ENCODE measurements at regions of chr11 and their contacts with region 1.

Region 1: GRCh38 chr11:1837171-1838076 is 1.4 kb upstream of the TNNI2 start:
- DNase-seq: peak; percentile 88
- ATAC-seq: peak; percentile 75
- H3K4me3 ChIP-seq: peak overlapping the region in 1 of 5 experiments; percentile 5
- H3K4me3 Mint-ChIP-seq: peak overlapping the region; percentile 56
- H3K27ac ChIP-seq: peak overlapping the region; percentile 22 to 68
- H3K27ac Mint-ChIP-seq: peak overlapping the region; percentile 78
- H3K4me1 ChIP-seq: peaks cover 41 to 51% of the 10 kb centered on the region in 2 donors
- H3K4me1 Mint-ChIP-seq: peaks cover 26% of the 10 kb centered on the region
- H3K27me3 ChIP-seq: peaks cover 0 to 19% (median 5%) of the 10 kb centered on the region in 4 experiments
- H3K27me3 Mint-ChIP-seq: no peaks in the 10 kb centered on the region
- CTCF ChIP-seq: peak; percentile 90

Region 2: DNA sequence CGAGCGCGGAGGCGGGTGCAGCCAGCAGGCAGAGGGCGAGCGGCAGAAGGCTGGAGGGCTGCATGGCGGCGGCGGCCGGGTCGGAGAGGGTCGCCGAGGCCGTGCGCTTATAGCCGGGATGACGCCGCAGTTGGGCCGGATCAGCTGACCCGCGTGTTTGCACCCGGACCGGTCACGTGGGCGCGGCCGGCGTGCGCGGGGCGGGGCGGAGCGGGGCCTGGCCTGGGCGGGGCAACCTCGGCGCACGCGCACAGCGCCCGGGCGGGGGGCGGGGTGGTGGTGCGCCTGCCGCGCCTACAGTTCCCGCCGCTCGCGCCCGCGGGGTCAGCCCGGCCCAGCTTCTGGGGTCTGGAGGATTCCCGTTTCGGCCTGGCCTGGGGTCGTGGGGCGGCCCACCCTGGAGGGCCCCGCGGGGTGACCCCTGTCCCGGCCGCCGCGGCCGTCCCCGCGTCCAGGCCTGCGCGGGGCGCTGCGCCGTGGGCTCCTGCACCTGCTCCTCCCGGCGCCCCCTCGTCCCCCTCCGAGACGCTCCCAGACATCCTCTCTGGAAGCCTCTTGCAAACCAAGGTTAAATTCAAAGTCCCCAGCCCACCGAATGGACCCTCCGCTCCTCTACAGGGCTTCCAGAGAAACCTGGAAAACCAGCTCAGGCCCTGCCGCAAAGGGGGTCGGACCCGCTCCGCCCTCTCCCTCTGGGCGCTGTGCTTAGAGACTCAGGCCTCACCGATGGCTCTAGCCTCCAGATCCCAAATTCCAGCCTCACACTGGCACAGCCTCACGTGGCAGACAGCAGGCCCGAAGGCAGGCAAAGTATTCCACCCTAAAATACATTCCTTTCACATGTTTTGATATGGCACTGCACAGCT is 73.4 kb before region 1 on chr11 and contains the start of gene CTSD:
- CTCF ChIA-PET with region 1: interaction called, 5 read pairs
- POLR2A ChIA-PET with region 1: no interaction called
- intact Hi-C with region 1: loop called (anchors 10 kb)
- DNase-seq: peak; percentile 88
- ATAC-seq: peak; percentile 94
- H3K4me3 ChIP-seq: peak within 1 kb of the TSS; percentile 16 to 80 (median 71)
- H3K4me3 Mint-ChIP-seq: peak within 1 kb of the TSS; percentile 91
- H3K27ac ChIP-seq: peak within 1 kb of the TSS in 1 of 2 donors; percentile 62
- H3K27ac Mint-ChIP-seq: peak within 1 kb of the TSS; percentile 88
- H3K4me1 ChIP-seq: peaks cover 13 to 26% of the 10 kb centered on the region in 2 donors
- H3K4me1 Mint-ChIP-seq: peaks cover 14% of the 10 kb centered on the region
- H3K27me3 ChIP-seq: peaks cover 0 to 4% (median 0%) of the 10 kb centered on the region in 4 experiments
- H3K27me3 Mint-ChIP-seq: no peaks in the 10 kb centered on the region
- CTCF ChIP-seq: peak; percentile 8
- total RNA-seq, gene CTSD: 80.4 and 83.5 TPM in 2 replicates

Region 3: DNA sequence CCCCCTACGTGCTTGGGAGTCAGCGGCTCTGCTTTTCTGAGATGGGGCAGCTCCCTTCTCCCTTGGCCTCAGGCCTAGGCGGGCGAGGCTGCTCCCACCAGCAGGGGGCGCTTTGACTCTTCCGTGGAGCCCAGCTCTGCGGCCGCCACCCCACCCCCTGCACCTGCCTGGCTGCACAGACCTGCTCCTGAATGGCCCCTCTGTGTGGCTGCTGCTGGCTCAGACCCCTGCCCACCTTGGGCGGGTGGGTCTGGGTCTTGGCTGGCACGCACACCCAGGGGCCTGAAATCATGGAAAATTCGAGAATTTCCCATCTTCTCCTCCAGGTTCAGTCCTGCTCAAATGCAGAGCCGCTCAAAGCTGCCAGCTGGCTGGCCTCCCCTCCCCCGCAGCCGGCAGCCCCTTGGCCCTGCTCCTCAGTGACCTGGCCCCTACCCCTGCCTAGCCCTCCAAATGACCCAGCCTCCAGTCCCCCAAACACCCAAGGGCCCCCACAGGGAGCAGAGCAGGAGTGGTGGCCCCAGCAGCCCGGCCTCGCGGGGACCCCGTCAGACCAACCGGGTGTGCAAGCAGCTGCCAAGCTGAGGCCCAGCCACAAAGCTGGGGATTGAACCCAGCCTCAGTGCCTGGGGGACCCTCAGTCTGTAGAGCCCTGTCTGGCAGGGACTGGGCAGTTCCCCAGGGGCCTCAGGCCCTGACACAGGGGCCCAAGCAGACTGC is 45.3 kb after region 1 on chr11:
- CTCF ChIA-PET with region 1: interaction called, 23 read pairs
- POLR2A ChIA-PET with region 1: interaction called, 9 read pairs
- intact Hi-C with region 1: loop called (anchors 1 kb)
- DNase-seq: peak; percentile 86
- ATAC-seq: peak; percentile 74
- H3K4me3 ChIP-seq: no peak overlapping the region
- H3K4me3 Mint-ChIP-seq: peak overlapping the region; percentile 34
- H3K27ac ChIP-seq: no peak overlapping the region
- H3K27ac Mint-ChIP-seq: peak overlapping the region; percentile 75
- H3K4me1 ChIP-seq: peaks cover 32 to 46% of the 10 kb centered on the region in 2 donors
- H3K4me1 Mint-ChIP-seq: peaks cover 38% of the 10 kb centered on the region
- H3K27me3 ChIP-seq: no peaks in the 10 kb centered on the region
- H3K27me3 Mint-ChIP-seq: no peaks in the 10 kb centered on the region
- CTCF ChIP-seq: peak; percentile 87

Region 4: GRCh38 chr11:2002807-2003206 is 165.4 kb after region 1 on chr11:
- CTCF ChIA-PET with region 1: interaction called, 79 read pairs
- POLR2A ChIA-PET with region 1: no interaction called
- intact Hi-C with region 1: no loop called
- DNase-seq: no peak
- ATAC-seq: peak; percentile 46
- H3K4me3 ChIP-seq: no peak overlapping the region
- H3K4me3 Mint-ChIP-seq: no peak overlapping the region
- H3K27ac ChIP-seq: no peak overlapping the region
- H3K27ac Mint-ChIP-seq: no peak overlapping the region
- H3K4me1 ChIP-seq: no peaks in the 10 kb centered on the region
- H3K4me1 Mint-ChIP-seq: no peaks in the 10 kb centered on the region
- H3K27me3 ChIP-seq: no peaks in the 10 kb centered on the region
- H3K27me3 Mint-ChIP-seq: no peaks in the 10 kb centered on the region
- CTCF ChIP-seq: no peak